ENCODE measurements at regions of chr17 and their contacts with region 1.

Region 1: GRCh38 chr17:81484195-81484979 is 28.2 kb downstream of the ACTG1 start:
- DNase-seq: peak; percentile 91
- H3K4me3 Mint-ChIP-seq: peak overlapping the region; percentile 29
- H3K27ac Mint-ChIP-seq: no peak overlapping the region
- H3K4me1 Mint-ChIP-seq: peaks cover 11% of the 10 kb centered on the region
- H3K27me3 Mint-ChIP-seq: peaks cover 31% of the 10 kb centered on the region

Region 2: DNA sequence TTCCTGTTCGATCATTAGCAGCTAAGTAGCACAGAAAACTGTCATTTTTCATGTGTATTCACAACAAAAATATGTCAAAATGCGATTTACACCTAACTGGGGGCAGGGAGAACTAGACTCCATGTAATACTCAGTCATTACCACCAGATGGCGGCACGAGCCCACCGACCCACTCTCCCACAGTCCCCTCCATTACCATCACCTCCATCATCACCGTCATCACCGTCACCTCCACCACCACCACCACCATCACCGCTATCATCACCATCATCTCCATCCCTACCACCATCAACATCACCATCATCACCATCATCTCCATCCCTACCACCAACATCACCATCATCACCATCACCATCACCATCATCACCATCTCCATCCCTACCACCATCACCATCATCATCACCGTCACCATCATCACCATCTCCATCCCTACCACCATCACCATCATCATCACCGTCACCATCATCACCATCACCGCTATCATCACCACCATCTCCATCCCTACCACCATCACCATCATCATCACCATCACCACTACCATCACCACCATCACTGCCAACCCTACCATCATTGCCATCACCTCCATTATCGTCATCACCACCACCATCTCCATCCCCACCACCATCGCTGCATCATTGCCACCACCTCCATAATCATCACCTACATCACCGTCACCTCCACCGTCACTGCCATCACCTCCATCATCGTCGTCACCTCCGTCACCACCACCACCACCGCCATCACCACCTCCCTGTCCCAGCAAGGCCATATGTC is 230.8 kb before region 1 on chr17:
- CTCF ChIA-PET with region 1: interaction called, 29 read pairs
- POLR2A ChIA-PET with region 1: interaction called, 3 read pairs
- intact Hi-C with region 1: loop called (anchors 5 kb)
- DNase-seq: peak; percentile 65
- H3K4me3 Mint-ChIP-seq: no peak overlapping the region
- H3K27ac Mint-ChIP-seq: no peak overlapping the region
- H3K4me1 Mint-ChIP-seq: peaks cover 3% of the 10 kb centered on the region
- H3K27me3 Mint-ChIP-seq: no peaks in the 10 kb centered on the region

Region 3: GRCh38 chr17:81294856-81295680 is 189.3 kb before region 1 on chr17 and contains the start of gene SLC38A10:
- CTCF ChIA-PET with region 1: interaction called, 58 read pairs
- POLR2A ChIA-PET with region 1: interaction called, 4 read pairs
- intact Hi-C with region 1: loop called (anchors 2 kb)
- DNase-seq: peak; percentile 95
- H3K4me3 Mint-ChIP-seq: peak within 1 kb of the TSS; percentile 94
- H3K27ac Mint-ChIP-seq: peak within 1 kb of the TSS; percentile 92
- H3K4me1 Mint-ChIP-seq: peaks cover 39% of the 10 kb centered on the region
- H3K27me3 Mint-ChIP-seq: no peaks in the 10 kb centered on the region
- total RNA-seq, gene SLC38A10: 60.7 to 60.9 TPM

Measured in activated CD4-positive, alpha-beta memory T cell treated with anti-CD3 and anti-CD28 coated beads for 36 hours (primary cell).